GM13977 (cell line): ENCODE measurements at regions of chr1 and their contacts with region 1.

Region 1: GRCh38 chr1:179877586-179878265 is at the start of gene TOR1AIP2:
- DNase-seq: peak; percentile 79
- CTCF ChIP-seq: no peak

Region 2: GRCh38 chr1:179743679-179744400 is 133.9 kb before region 1 on chr1:
- in situ Hi-C with region 1: no loop called
- DNase-seq: peak; percentile 43
- CTCF ChIP-seq: no peak

Region 3: DNA sequence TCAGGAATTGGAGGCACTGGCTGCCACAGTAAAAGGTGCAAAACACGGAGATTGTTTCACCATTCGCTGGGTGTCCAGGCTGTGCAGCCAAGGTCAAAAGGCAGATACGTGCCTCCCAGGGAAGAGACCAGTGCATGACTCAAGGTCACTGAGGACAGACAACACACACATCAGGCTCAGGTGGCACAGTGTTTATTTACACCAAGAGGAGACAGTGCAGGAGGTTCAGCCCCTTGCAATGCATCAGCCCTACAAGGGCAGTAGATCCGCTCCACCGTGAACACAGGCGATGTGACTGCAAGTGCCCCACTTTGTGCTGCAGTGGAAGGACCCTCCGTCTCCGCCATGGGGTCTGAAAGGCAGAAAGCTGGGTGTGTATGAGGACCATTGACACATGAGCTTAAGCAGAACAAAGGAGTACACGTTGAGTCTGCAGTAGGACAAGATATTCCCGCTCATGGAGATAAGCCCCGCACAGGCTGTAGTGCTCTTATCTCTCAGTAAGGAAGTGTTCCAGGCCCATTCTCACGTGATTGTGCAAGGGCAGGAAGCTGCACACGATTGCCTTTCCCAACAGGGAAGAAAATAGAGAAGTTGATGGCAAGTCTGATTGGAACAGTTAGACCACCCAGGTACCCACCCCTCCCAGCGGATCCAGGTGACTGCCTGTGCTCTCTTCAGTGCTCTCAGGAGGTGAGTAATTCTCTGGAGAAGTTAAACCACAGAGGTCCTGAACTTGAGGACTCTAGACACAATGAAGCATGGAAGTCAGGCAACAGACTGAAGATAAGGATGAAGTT is 239.4 kb after region 1 on chr1:
- in situ Hi-C with region 1: no loop called
- DNase-seq: no peak
- CTCF ChIP-seq: no peak

Region 4: GRCh38 chr1:180168786-180169639 is 291.3 kb after region 1 on chr1:
- in situ Hi-C with region 1: loop called (anchors 10 kb)
- DNase-seq: peak; percentile 68
- CTCF ChIP-seq: peak; percentile 68

Region 5: GRCh38 chr1:180248731-180249681 is 371.3 kb after region 1 on chr1:
- in situ Hi-C with region 1: no loop called
- DNase-seq: no peak
- CTCF ChIP-seq: no peak